Right lobe of liver (tissue), 6 donors: ENCODE measurements at regions of chr17 and their contacts with region 1.

Region 1: GRCh38 chr17:78112518-78113226 is 15.9 kb downstream of the TMC6 start:
- DNase-seq: peak; percentile 79 to 82 (median 80)
- ATAC-seq: peak; percentile 86 to 90 (median 88)
- H3K4me3 ChIP-seq: no peak overlapping the region
- H3K27ac ChIP-seq: no peak overlapping the region
- H3K4me1 ChIP-seq: no peaks in the 10 kb centered on the region
- H3K27me3 ChIP-seq: no peaks in the 10 kb centered on the region
- CTCF ChIP-seq: peak; percentile 98 to 100 (median 99)
- POLR2A ChIP-seq: no peak

Region 2: GRCh38 chr17:77821097-77821496 is 291.6 kb before region 1 on chr17:
- intact Hi-C with region 1: no loop called
- DNase-seq: no peak
- ATAC-seq: no peak
- H3K4me3 ChIP-seq: no peak overlapping the region
- H3K27ac ChIP-seq: no peak overlapping the region
- H3K4me1 ChIP-seq: no peaks in the 10 kb centered on the region
- H3K27me3 ChIP-seq: no peaks in the 10 kb centered on the region
- CTCF ChIP-seq: no peak
- POLR2A ChIP-seq: no peak

Region 3: GRCh38 chr17:78032166-78032565 is 80.5 kb before region 1 on chr17:
- intact Hi-C with region 1: no loop called
- DNase-seq: no peak
- ATAC-seq: no peak
- H3K4me3 ChIP-seq: no peak overlapping the region
- H3K27ac ChIP-seq: no peak overlapping the region
- H3K4me1 ChIP-seq: no peaks in the 10 kb centered on the region
- H3K27me3 ChIP-seq: no peaks in the 10 kb centered on the region
- CTCF ChIP-seq: no peak
- POLR2A ChIP-seq: no peak

Region 4: DNA sequence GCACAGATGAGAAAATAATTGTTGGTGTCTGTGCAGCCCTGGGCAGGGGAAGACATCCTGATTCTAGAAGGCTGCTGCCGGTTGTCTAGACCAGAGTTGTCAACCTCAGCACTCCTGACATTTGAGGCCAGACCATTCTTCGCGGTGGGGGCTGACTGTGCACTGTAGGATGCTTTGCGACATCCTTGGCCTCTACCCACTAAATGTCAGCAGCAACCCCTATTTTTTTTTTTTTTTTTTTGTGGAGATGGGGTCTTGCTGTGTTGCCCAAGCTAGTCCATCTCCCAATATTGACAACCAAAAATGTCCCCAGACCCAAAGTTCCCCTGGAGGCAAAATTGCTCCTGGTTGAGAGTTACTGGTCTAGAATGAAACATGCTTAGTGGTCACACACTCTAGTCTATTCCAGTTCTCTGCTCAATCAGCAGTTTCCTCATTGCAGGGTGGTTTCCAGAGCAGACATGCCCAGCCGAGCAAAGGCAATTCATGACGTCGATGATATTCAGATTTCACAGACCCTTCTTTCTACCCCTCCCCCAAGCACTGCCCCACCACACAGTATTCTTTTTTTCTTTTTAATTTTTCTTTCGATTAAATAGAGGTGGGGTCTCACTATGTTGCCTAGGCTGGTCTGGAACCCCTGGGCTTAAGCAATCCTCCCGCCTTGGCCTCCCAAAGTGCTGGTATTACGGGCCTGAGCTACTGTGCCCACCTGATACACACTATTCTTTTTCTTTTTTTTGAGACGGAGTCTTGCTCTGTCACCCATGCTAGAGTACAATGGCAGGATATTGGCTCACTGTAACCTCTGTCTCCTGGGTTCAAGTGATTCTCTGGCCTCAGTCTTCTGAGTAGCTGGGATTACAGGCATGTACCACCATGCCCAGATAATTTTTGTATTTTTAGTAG is 42.5 kb after region 1 on chr17:
- intact Hi-C with region 1: no loop called
- DNase-seq: no peak
- ATAC-seq: peak; percentile 23 to 63 (median 44)
- H3K4me3 ChIP-seq: no peak overlapping the region
- H3K27ac ChIP-seq: no peak overlapping the region
- H3K4me1 ChIP-seq: peaks cover 0 to 9% (median 0%) of the 10 kb centered on the region in 4 donors
- H3K27me3 ChIP-seq: no peaks in the 10 kb centered on the region
- CTCF ChIP-seq: no peak
- POLR2A ChIP-seq: no peak

Region 5: GRCh38 chr17:78168242-78168902 is 55.7 kb after region 1 on chr17 and contains the start of gene SYNGR2:
- intact Hi-C with region 1: loop called (anchors 5 kb)
- DNase-seq: peak; percentile 90 to 92 (median 91)
- ATAC-seq: peak; percentile 78 to 94 (median 84)
- H3K4me3 ChIP-seq: peak within 1 kb of the TSS; percentile 38 to 79 (median 66)
- H3K27ac ChIP-seq: peak within 1 kb of the TSS; percentile 57 to 67 (median 62)
- H3K4me1 ChIP-seq: peaks cover 0 to 7% (median 0%) of the 10 kb centered on the region in 4 donors
- H3K27me3 ChIP-seq: no peaks in the 10 kb centered on the region
- CTCF ChIP-seq: peak in 2 of 4 donors; percentile 5 to 7
- POLR2A ChIP-seq: peak; percentile 89
- total RNA-seq, gene SYNGR2: 43.3 to 55.8 (median 50.4) TPM

Region 6: GRCh38 chr17:78176548-78177025 is 63.9 kb after region 1 on chr17:
- intact Hi-C with region 1: loop called in 1 of 2 experiments (anchors 5 kb)
- DNase-seq: peak; percentile 71 to 78 (median 75)
- ATAC-seq: peak; percentile 6 to 19 (median 12)
- H3K4me3 ChIP-seq: no peak overlapping the region
- H3K27ac ChIP-seq: peak overlapping the region in 1 of 3 donors; percentile 77
- H3K4me1 ChIP-seq: peaks cover 0 to 34% (median 17%) of the 10 kb centered on the region in 4 donors
- H3K27me3 ChIP-seq: no peaks in the 10 kb centered on the region
- CTCF ChIP-seq: peak; percentile 63 to 82 (median 66)
- POLR2A ChIP-seq: no peak

Region 7: GRCh38 chr17:78241277-78242023 is 128.8 kb after region 1 on chr17:
- intact Hi-C with region 1: loop called (anchors 5 to 10 kb)
- DNase-seq: no peak
- ATAC-seq: peak in 3 of 4 donors; percentile 21 to 41 (median 25)
- H3K4me3 ChIP-seq: no peak overlapping the region
- H3K27ac ChIP-seq: no peak overlapping the region
- H3K4me1 ChIP-seq: no peaks in the 10 kb centered on the region
- H3K27me3 ChIP-seq: no peaks in the 10 kb centered on the region
- CTCF ChIP-seq: no peak
- POLR2A ChIP-seq: no peak

Region 8: DNA sequence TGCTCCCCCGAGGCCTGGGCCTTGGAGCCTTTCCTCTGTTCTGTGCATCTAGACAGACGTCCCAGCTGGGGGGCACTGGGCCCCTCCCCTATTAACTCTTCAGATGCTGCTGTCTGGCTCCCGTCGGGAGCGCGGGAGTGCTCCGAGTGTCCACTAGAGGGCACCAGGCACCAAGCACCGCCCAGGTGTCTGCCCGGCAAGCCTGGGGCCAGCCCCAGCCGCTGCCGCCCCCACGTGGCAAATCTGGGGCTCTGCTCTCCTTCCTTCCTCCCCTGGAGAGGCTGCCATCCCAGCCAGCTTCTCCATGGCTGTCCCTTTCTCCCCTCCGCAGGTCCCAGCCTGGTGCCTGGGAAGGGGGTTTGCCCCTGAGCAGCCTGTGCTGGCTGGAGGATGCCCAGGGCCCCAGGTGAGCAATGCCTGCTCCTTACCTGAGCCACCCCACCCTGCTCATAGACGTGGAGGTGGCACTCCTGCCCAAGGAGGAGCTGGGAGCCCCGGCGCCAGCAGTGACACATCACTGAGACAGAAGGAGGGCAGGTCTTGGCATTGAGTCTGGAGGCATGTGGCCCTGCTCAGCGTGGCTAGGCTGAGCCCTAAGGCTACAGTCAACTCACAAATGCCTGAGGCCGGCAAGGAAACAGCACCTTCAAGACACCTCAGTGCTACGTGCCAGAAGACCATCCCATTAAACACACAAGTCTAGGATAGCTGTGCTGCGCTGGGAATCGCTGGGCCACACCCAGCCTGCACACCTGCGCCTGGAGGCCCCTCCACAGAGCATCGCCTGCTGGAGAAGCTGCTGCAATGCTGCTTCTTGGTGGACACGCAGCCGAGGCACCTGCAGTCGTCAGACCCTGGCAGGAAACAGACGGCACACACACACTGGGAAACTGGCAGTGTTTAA is 138.5 kb after region 1 on chr17:
- intact Hi-C with region 1: loop called (anchors 5 to 10 kb)
- DNase-seq: peak; percentile 89 to 91 (median 90)
- ATAC-seq: peak; percentile 82 to 91 (median 87)
- H3K4me3 ChIP-seq: no peak overlapping the region
- H3K27ac ChIP-seq: no peak overlapping the region
- H3K4me1 ChIP-seq: peaks cover 0 to 12% (median 3%) of the 10 kb centered on the region in 4 donors
- H3K27me3 ChIP-seq: no peaks in the 10 kb centered on the region
- CTCF ChIP-seq: peak; percentile 98 to 100 (median 100)
- POLR2A ChIP-seq: no peak

Region 9: GRCh38 chr17:78289802-78290363 is 177.2 kb after region 1 on chr17:
- intact Hi-C with region 1: no loop called
- DNase-seq: peak; percentile 73 to 79 (median 77)
- ATAC-seq: peak; percentile 74 to 80 (median 76)
- H3K4me3 ChIP-seq: no peak overlapping the region
- H3K27ac ChIP-seq: no peak overlapping the region
- H3K4me1 ChIP-seq: peaks cover 0 to 34% (median 16%) of the 10 kb centered on the region in 4 donors
- H3K27me3 ChIP-seq: no peaks in the 10 kb centered on the region
- CTCF ChIP-seq: peak; percentile 57 to 75 (median 66)
- POLR2A ChIP-seq: no peak